ENCODE measurements at regions of chr16 and their contacts with region 1.

Region 1: GRCh38 chr16:53022374-53022773 is 30.3 kb downstream of the CHD9NB start:
- DNase-seq: peak; percentile 36
- H3K4me3 ChIP-seq: no peak overlapping the region
- H3K27ac ChIP-seq: no peak overlapping the region
- H3K4me1 ChIP-seq: peaks cover 4% of the 10 kb centered on the region
- H3K27me3 ChIP-seq: no peaks in the 10 kb centered on the region
- CTCF ChIP-seq: peak; percentile 51 to 62

Region 2: GRCh38 chr16:52912565-52913173 is 109.7 kb before region 1 on chr16:
- CTCF ChIA-PET with region 1: no interaction called
- dilution Hi-C with region 1: no loop called
- in situ Hi-C with region 1: no loop called
- intact Hi-C with region 1: loop called (anchors 1 kb)
- DNase-seq: peak; percentile 43
- H3K4me3 ChIP-seq: no peak overlapping the region
- H3K27ac ChIP-seq: no peak overlapping the region
- H3K4me1 ChIP-seq: no peaks in the 10 kb centered on the region
- H3K27me3 ChIP-seq: no peaks in the 10 kb centered on the region
- CTCF ChIP-seq: peak; percentile 87 to 89